IMR-90 (cell line): ENCODE measurements at regions of chr11 and their contacts with region 1.

Region 1: GRCh38 chr11:128884703-128885338 is 6.3 kb upstream of the KCNJ5 start:
- DNase-seq: peak; percentile 69
- ATAC-seq: peak; percentile 88
- H3K4me3 ChIP-seq: no peak overlapping the region
- H3K27ac ChIP-seq: no peak overlapping the region
- H3K4me1 ChIP-seq: no peaks in the 10 kb centered on the region
- H3K27me3 ChIP-seq: peaks cover 66% of the 10 kb centered on the region
- CTCF ChIP-seq: peak; percentile 93
- POLR2A ChIP-seq: peak; percentile 46; the same call in 1 of the 2 replicates
- RAD21 ChIP-seq: peak; percentile 97

Region 2: GRCh38 chr11:128948589-128948988 is 63.8 kb after region 1 on chr11:
- CTCF ChIA-PET with region 1: interaction called, 43 read pairs
- POLR2A ChIA-PET with region 1: no interaction called
- dilution Hi-C with region 1: no loop called
- in situ Hi-C with region 1: loop called (anchors 5 kb)
- intact Hi-C with region 1: no loop called
- DNase-seq: no peak
- ATAC-seq: no peak
- H3K4me3 ChIP-seq: no peak overlapping the region
- H3K27ac ChIP-seq: no peak overlapping the region
- H3K4me1 ChIP-seq: no peaks in the 10 kb centered on the region
- H3K27me3 ChIP-seq: no peaks in the 10 kb centered on the region; the same call in 1 of the 2 replicates
- CTCF ChIP-seq: 0 out of 2 replicates have a peak, but pooled peaks have one; percentile 10
- POLR2A ChIP-seq: no peak
- RAD21 ChIP-seq: 0 out of 2 replicates have a peak, but pooled peaks have one; percentile 22

Region 3: GRCh38 chr11:128956401-128957201 is 71.8 kb after region 1 on chr11:
- CTCF ChIA-PET with region 1: interaction called, 71 read pairs
- POLR2A ChIA-PET with region 1: interaction called, 3 read pairs
- dilution Hi-C with region 1: no loop called
- in situ Hi-C with region 1: loop called (anchors 5 kb)
- intact Hi-C with region 1: loop called (anchors 1 kb)
- DNase-seq: peak; percentile 78
- ATAC-seq: peak; percentile 83
- H3K4me3 ChIP-seq: no peak overlapping the region
- H3K27ac ChIP-seq: no peak overlapping the region
- H3K4me1 ChIP-seq: no peaks in the 10 kb centered on the region
- H3K27me3 ChIP-seq: peaks cover 10% of the 10 kb centered on the region
- CTCF ChIP-seq: peak; percentile 88
- POLR2A ChIP-seq: no peak
- RAD21 ChIP-seq: peak; percentile 90

Region 4: GRCh38 chr11:129331871-129332274 is 447.1 kb after region 1 on chr11:
- CTCF ChIA-PET with region 1: no interaction called
- POLR2A ChIA-PET with region 1: no interaction called
- dilution Hi-C with region 1: no loop called
- in situ Hi-C with region 1: loop called (anchors 5 kb)
- intact Hi-C with region 1: loop called (anchors 1 kb)
- DNase-seq: peak; percentile 69
- ATAC-seq: peak; percentile 99
- H3K4me3 ChIP-seq: no peak overlapping the region
- H3K27ac ChIP-seq: no peak overlapping the region
- H3K4me1 ChIP-seq: no peaks in the 10 kb centered on the region
- H3K27me3 ChIP-seq: no peaks in the 10 kb centered on the region
- CTCF ChIP-seq: peak; percentile 92
- POLR2A ChIP-seq: no peak
- RAD21 ChIP-seq: peak; percentile 97